Psoas muscle (tissue), 8 donors: ENCODE measurements at regions of chr6 and their contacts with region 1.

Region 1: GRCh38 chr6:122609856-122610689 is at the start of gene PKIB:
- DNase-seq: peak; percentile 72 to 84
- ATAC-seq: peak; percentile 93 to 99 (median 98)
- H3K4me3 ChIP-seq: peak within 1 kb of the TSS; percentile 65
- H3K27ac ChIP-seq: peak within 1 kb of the TSS; percentile 14
- H3K4me1 ChIP-seq: peaks cover 5% of the 10 kb centered on the region
- H3K27me3 ChIP-seq: peaks cover 0 to 3% (median 0%) of the 10 kb centered on the region in 3 donors
- CTCF ChIP-seq: no peak
- total RNA-seq, gene PKIB: 0.20 to 1.1 (median 0.84) TPM

Region 2: DNA sequence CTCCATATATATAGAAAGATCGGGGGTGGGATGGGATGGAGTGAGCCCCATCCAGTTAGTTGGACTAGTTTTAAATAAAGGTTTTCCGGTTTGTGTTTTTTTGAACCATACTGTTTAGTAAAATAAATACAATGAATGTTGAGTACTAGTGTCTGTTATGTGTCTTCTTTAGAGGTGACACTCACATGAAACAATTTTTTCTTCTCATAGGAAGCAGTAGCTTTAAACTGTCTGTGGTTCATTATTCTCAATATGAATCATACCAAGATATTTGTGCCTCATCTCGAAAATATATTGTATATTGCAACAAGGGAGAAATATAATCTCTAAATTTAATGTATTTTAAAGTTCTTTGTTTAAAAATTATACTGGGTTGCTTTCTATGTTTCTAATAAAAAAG is 177.3 kb before region 1 on chr6:
- intact Hi-C with region 1: no loop called
- DNase-seq: no peak
- ATAC-seq: no peak
- H3K4me3 ChIP-seq: no peak overlapping the region
- H3K27ac ChIP-seq: peak overlapping the region; percentile 1
- H3K4me1 ChIP-seq: peaks cover 15% of the 10 kb centered on the region
- H3K27me3 ChIP-seq: no peaks in the 10 kb centered on the region
- CTCF ChIP-seq: no peak

Region 3: GRCh38 chr6:122568797-122569661 is 41.0 kb before region 1 on chr6:
- intact Hi-C with region 1: no loop called
- DNase-seq: no peak
- ATAC-seq: no peak
- H3K4me3 ChIP-seq: no peak overlapping the region
- H3K27ac ChIP-seq: no peak overlapping the region
- H3K4me1 ChIP-seq: no peaks in the 10 kb centered on the region
- H3K27me3 ChIP-seq: no peaks in the 10 kb centered on the region
- CTCF ChIP-seq: no peak

Region 4: GRCh38 chr6:122717350-122717749 is 107.3 kb after region 1 on chr6:
- intact Hi-C with region 1: loop called in 1 of 2 experiments (anchors 5 kb)
- DNase-seq: no peak
- ATAC-seq: peak; percentile 56 to 80 (median 68)
- H3K4me3 ChIP-seq: no peak overlapping the region
- H3K27ac ChIP-seq: no peak overlapping the region
- H3K4me1 ChIP-seq: no peaks in the 10 kb centered on the region
- H3K27me3 ChIP-seq: no peaks in the 10 kb centered on the region
- CTCF ChIP-seq: no peak